ENCODE measurements at regions of chrX and their contacts with region 1.

Region 1: DNA sequence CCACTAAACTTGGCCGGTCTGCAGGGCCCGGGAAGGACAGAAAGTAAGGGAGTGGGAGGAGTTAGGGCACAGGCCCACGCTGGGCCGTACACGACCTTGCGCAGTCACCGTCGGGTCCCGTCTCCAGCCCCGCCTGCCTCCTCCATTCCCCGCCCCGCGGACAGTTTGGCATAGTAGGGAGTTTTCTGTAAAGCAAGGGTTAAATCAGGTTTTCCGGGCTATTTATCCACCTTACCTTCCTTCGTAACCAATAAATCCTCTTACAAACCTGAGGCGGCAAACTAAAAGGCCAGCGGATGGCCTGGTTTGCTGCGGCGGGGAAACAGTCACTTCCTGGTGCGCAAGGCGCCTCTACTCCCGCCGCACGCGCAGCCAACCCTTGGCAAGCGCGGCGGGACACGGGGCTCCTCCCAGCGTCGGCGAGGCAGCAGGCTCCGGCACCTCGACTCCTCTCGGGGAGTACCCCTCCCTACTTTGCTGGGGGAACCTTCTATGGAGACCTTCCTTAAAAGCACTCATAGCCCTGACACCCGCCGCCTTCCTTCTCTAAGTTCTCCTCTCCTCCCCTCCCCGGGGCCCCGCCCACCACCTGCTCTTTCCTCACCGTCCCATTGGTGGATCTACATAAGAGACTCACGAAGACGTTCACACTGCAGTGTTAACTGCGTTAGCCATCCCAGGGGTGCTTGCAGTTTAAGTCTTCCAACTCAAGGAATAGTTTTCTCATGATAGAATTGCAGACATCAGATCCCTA is at the start of gene TRMT2B:
- DNase-seq: peak; percentile 80
- H3K4me3 ChIP-seq: peak within 1 kb of the TSS; percentile 89
- H3K27ac ChIP-seq: peak within 1 kb of the TSS; percentile 68
- H3K4me1 ChIP-seq: peaks cover 5% of the 10 kb centered on the region
- CTCF ChIP-seq: no peak
- total RNA-seq, gene TRMT2B: 20.7 and 25.3 TPM in 2 replicates

Region 2: DNA sequence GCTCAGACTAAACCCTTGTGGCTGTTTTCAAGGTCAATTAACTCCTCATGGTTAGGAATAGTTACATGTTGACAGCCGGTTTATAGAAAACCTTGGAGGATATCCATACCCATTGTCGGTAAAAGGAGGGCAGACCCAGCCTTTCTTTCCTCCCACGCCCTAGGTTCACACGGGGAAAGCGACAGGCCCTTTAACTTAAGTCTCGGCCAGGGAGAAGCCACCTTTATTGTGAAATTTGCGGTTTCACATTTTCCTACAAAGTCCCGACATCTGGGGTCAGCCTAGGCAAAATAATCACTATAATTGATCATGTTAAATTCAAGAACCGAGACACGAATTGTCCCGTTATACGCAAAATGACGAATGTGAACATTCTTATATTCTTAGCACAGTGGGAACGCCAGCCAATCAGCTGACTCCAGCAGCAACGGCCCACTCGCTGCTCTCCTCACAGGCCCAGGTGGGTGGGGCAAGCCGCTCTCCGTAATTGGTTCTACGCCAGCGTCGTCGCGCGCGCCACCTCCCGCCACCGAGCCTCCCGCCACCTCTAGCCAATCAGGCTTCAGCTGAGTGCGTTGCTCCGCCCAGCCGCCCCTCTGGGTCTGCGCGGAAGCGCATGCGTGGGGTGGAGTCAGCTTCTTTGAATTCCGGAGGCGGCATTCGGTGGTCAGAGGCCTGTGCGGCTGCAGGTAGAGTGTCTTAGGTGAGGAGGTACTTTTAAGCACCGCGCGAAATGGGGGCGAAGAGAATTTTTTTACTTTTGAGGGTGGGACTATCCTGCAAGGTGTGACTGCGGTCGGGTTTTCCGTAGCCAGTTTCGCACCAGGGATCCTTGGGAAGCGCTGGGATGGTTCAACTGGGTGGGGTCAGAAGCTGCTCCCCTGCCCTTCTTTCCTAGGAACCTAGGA is 46.1 kb after region 1 on chrX and contains the start of gene CENPI:
- CTCF ChIA-PET with region 1: no interaction called
- POLR2A ChIA-PET with region 1: interaction called, 6 read pairs
- intact Hi-C with region 1: loop called (anchors 1 kb)
- DNase-seq: peak; percentile 94
- H3K4me3 ChIP-seq: peak within 1 kb of the TSS; percentile 98
- H3K27ac ChIP-seq: peak within 1 kb of the TSS; percentile 71
- H3K4me1 ChIP-seq: peaks cover 15% of the 10 kb centered on the region
- CTCF ChIP-seq: no peak
- total RNA-seq, gene CENPI: 27.7 and 28.4 TPM in 2 replicates